ENCODE measurements at regions of chr9 and their contacts with region 1.

Region 1: GRCh38 chr9:109972026-109972882 is 192.3 kb downstream of the PALM2AKAP2 start:
- DNase-seq: peak; percentile 42
- H3K4me3 Mint-ChIP-seq: no peak overlapping the region
- H3K27ac Mint-ChIP-seq: no peak overlapping the region
- H3K4me1 Mint-ChIP-seq: peaks cover 79% of the 10 kb centered on the region
- H3K27me3 Mint-ChIP-seq: no peaks in the 10 kb centered on the region

Region 2: GRCh38 chr9:109119439-109120203 is 852.6 kb before region 1 on chr9 and contains the start of gene TMEM245:
- CTCF ChIA-PET with region 1: no interaction called
- POLR2A ChIA-PET with region 1: no interaction called
- intact Hi-C with region 1: loop called (anchors 5 kb)
- DNase-seq: peak; percentile 97
- H3K4me3 Mint-ChIP-seq: peak within 1 kb of the TSS; percentile 88
- H3K27ac Mint-ChIP-seq: peak within 1 kb of the TSS; percentile 86
- H3K4me1 Mint-ChIP-seq: peaks cover 38% of the 10 kb centered on the region
- H3K27me3 Mint-ChIP-seq: no peaks in the 10 kb centered on the region
- total RNA-seq, gene TMEM245: 23.0 TPM

Region 3: GRCh38 chr9:109912726-109913460 is 59.4 kb before region 1 on chr9:
- CTCF ChIA-PET with region 1: interaction called, 3 read pairs
- POLR2A ChIA-PET with region 1: interaction called, 5 read pairs
- intact Hi-C with region 1: loop called (anchors 1 kb)
- DNase-seq: no peak
- H3K4me3 Mint-ChIP-seq: no peak overlapping the region
- H3K27ac Mint-ChIP-seq: no peak overlapping the region
- H3K4me1 Mint-ChIP-seq: peaks cover 16% of the 10 kb centered on the region
- H3K27me3 Mint-ChIP-seq: no peaks in the 10 kb centered on the region

Region 4: GRCh38 chr9:109935406-109936087 is 36.7 kb before region 1 on chr9:
- CTCF ChIA-PET with region 1: no interaction called
- POLR2A ChIA-PET with region 1: interaction called, 4 read pairs
- intact Hi-C with region 1: loop called (anchors 1 kb)
- DNase-seq: no peak
- H3K4me3 Mint-ChIP-seq: no peak overlapping the region
- H3K27ac Mint-ChIP-seq: peak overlapping the region; percentile 81
- H3K4me1 Mint-ChIP-seq: peaks cover 31% of the 10 kb centered on the region
- H3K27me3 Mint-ChIP-seq: peaks cover 5% of the 10 kb centered on the region

Region 5: DNA sequence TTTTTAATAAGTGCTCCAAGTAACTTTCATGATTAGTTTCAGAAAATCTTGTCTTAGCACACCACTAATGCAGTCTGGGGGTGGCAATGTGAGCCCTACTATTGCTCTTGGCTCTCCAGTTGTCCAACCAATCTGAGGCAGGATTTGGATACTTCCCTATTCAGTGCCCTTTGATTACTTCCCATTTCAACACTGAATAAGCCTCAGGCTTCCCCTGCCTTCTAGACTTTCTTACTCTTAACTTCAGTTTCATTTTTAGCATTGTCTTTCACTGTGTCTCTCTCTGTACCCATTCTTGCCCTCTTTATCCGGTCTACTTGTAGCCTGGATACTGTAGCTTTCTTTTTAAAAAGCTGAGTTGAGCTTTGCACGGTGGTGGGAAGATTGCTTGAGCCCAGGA is 49.6 kb after region 1 on chr9:
- CTCF ChIA-PET with region 1: no interaction called
- POLR2A ChIA-PET with region 1: no interaction called
- intact Hi-C with region 1: loop called (anchors 2 kb)
- DNase-seq: no peak
- H3K4me3 Mint-ChIP-seq: no peak overlapping the region
- H3K27ac Mint-ChIP-seq: peak overlapping the region; percentile 31
- H3K4me1 Mint-ChIP-seq: peaks cover 11% of the 10 kb centered on the region
- H3K27me3 Mint-ChIP-seq: no peaks in the 10 kb centered on the region

Region 6: GRCh38 chr9:111483862-111484571 is 1511.8 kb after region 1 on chr9 and contains the start of gene ECPAS:
- CTCF ChIA-PET with region 1: no interaction called
- POLR2A ChIA-PET with region 1: no interaction called
- intact Hi-C with region 1: loop called (anchors 10 kb)
- DNase-seq: peak; percentile 80
- H3K4me3 Mint-ChIP-seq: peak within 1 kb of the TSS; percentile 85
- H3K27ac Mint-ChIP-seq: peak within 1 kb of the TSS; percentile 87
- H3K4me1 Mint-ChIP-seq: peaks cover 30% of the 10 kb centered on the region
- H3K27me3 Mint-ChIP-seq: no peaks in the 10 kb centered on the region
- total RNA-seq, gene ECPAS: 66.5 to 67.0 TPM